ENCODE measurements at regions of chr4 and their contacts with region 1.

Region 1: GRCh38 chr4:37715889-37716402 is 29.8 kb upstream of the RELL1 start:
- DNase-seq: peak; percentile 57
- H3K4me3 Mint-ChIP-seq: no peak overlapping the region
- H3K27ac Mint-ChIP-seq: peak overlapping the region; percentile 81
- H3K4me1 Mint-ChIP-seq: peaks cover 20% of the 10 kb centered on the region
- H3K27me3 Mint-ChIP-seq: peaks cover 10% of the 10 kb centered on the region

Region 2: GRCh38 chr4:36551697-36552214 is 1164.2 kb before region 1 on chr4:
- CTCF ChIA-PET with region 1: no interaction called
- POLR2A ChIA-PET with region 1: no interaction called
- intact Hi-C with region 1: loop called (anchors 5 kb)
- DNase-seq: peak; percentile 60
- H3K4me3 Mint-ChIP-seq: no peak overlapping the region
- H3K27ac Mint-ChIP-seq: peak overlapping the region; percentile 53
- H3K4me1 Mint-ChIP-seq: peaks cover 7% of the 10 kb centered on the region
- H3K27me3 Mint-ChIP-seq: peaks cover 2% of the 10 kb centered on the region

Region 3: DNA sequence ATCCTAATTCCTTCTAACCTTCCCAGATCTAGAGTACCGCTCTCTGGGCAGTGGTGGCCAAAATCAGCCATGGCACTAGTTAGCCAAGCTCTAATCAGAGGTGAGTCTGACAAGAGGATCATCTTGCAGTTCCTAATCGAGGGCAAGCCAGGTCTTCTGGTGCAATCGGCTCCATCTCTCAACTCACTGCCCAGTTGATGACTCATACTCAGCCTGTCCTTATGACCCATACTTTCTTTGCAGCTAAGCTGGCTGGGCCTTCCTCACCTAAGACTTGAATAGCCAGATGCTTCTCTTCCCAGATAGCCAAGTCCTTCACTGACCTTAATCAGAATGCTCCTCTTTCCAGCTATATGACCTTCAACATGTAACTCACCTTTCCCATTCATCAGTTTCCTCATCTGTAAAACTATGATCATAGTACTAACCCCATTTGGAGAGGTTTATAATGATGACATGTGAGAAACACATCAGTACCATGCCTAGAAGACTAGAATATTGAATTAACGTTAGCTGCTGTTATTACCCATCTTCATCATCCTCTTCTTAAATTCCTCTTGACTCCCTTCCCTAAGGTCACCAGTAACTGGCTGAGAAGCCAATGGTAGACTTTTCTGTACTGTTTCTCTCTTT is 86.9 kb before region 1 on chr4:
- CTCF ChIA-PET with region 1: no interaction called
- POLR2A ChIA-PET with region 1: no interaction called
- intact Hi-C with region 1: no loop called
- DNase-seq: no peak
- H3K4me3 Mint-ChIP-seq: no peak overlapping the region
- H3K27ac Mint-ChIP-seq: no peak overlapping the region
- H3K4me1 Mint-ChIP-seq: no peaks in the 10 kb centered on the region
- H3K27me3 Mint-ChIP-seq: no peaks in the 10 kb centered on the region

Region 4: DNA sequence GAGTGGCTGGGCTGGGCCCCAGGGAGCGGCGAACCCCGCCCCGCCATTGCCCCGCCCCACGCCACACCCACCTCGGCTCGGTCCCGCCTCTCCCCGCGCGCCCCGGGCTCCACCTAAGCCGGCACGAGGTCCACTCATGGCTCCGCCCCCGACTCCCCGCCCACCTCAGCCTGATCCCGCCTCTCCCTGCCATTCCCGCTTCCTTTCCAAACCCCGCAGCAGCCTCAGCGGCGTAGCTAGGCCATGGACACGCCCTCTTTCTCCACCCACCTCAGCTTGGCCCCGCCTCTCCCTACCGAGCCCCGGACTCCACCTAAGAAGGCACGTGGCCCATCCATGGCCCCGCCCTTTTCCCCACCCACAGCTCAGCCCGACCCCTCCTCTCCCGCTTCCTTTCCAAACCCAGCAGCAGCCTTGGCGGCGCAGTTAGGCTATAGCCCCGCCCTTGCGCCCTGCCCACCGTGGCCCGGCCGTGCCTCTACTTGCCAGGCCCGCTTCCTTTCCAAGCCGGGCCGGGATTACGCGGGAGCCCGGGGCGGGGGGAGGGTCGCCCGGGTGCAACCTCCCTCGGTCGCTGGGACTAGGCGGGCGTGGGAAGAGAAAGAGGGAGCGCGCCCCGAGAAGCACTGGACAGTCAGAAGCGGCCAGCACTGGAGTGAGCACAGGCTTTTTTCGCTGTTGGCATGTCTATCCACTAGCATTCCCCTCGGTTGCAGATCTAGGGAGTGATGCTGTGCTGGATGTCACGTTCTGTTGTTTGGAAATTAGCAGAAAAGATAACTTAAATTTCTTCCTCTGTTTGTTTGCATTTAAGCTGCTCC is 29.4 kb before region 1 on chr4 and contains the start of gene RELL1:
- CTCF ChIA-PET with region 1: no interaction called
- POLR2A ChIA-PET with region 1: interaction called, 6 read pairs
- intact Hi-C with region 1: loop called (anchors 1 kb)
- DNase-seq: peak; percentile 100
- H3K4me3 Mint-ChIP-seq: peak within 1 kb of the TSS; percentile 86
- H3K27ac Mint-ChIP-seq: peak within 1 kb of the TSS; percentile 91
- H3K4me1 Mint-ChIP-seq: peaks cover 34% of the 10 kb centered on the region
- H3K27me3 Mint-ChIP-seq: no peaks in the 10 kb centered on the region
- total RNA-seq, gene RELL1: 15.0 to 16.0 TPM

Region 5: DNA sequence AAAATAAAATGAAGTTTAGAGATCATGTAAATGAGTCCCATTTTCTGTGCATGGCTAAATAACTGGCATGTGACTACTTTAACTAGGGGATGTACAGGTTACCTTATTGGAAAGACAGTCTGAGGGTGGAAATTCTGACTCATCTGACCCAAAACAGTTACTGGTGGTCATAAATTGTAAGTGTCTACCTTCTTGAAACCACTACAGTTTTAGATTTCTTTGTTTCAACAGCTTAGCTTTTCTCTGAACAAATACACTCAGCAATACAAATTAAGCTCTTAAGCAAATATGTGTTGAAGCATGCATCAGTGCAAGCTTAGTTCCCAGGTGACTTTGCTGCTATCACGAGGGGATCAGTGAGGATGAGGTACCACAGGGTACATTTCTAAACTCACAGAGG is 49.8 kb after region 1 on chr4:
- CTCF ChIA-PET with region 1: no interaction called
- POLR2A ChIA-PET with region 1: no interaction called
- intact Hi-C with region 1: loop called (anchors 2 kb)
- DNase-seq: no peak
- H3K4me3 Mint-ChIP-seq: no peak overlapping the region
- H3K27ac Mint-ChIP-seq: peak overlapping the region; percentile 14
- H3K4me1 Mint-ChIP-seq: peaks cover 6% of the 10 kb centered on the region
- H3K27me3 Mint-ChIP-seq: no peaks in the 10 kb centered on the region

Measured in activated CD4-positive, alpha-beta memory T cell treated with anti-CD3 and anti-CD28 coated beads for 36 hours (primary cell).